Panc1 (cell line): ENCODE measurements at regions of chr13 and their contacts with region 1.

Region 1: DNA sequence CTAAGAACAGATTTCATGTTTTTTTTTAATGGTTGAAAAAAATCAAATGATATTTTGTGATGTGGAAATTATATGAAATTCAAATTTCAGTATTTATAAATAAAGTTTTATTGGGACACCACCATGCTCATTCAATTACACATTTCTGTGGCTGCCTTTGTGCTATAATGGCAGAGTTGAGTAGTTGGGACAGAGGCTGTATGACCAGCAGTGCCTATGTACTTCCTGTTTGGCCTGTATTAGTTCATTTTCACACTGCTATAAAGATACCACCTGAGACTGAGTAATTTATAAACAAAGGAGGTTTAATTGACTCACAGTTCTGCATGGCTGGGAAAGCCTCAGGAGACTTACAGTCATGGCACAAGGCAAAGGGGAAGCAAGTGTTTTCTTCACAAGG is 33.6 kb downstream of the AKAP11 start:
- DNase-seq: no peak
- ATAC-seq: no peak
- H3K4me3 ChIP-seq: no peak overlapping the region
- H3K27ac ChIP-seq: no peak overlapping the region
- H3K4me1 ChIP-seq: no peaks in the 10 kb centered on the region
- H3K27me3 ChIP-seq: no peaks in the 10 kb centered on the region
- CTCF ChIP-seq: no peak

Region 2: DNA sequence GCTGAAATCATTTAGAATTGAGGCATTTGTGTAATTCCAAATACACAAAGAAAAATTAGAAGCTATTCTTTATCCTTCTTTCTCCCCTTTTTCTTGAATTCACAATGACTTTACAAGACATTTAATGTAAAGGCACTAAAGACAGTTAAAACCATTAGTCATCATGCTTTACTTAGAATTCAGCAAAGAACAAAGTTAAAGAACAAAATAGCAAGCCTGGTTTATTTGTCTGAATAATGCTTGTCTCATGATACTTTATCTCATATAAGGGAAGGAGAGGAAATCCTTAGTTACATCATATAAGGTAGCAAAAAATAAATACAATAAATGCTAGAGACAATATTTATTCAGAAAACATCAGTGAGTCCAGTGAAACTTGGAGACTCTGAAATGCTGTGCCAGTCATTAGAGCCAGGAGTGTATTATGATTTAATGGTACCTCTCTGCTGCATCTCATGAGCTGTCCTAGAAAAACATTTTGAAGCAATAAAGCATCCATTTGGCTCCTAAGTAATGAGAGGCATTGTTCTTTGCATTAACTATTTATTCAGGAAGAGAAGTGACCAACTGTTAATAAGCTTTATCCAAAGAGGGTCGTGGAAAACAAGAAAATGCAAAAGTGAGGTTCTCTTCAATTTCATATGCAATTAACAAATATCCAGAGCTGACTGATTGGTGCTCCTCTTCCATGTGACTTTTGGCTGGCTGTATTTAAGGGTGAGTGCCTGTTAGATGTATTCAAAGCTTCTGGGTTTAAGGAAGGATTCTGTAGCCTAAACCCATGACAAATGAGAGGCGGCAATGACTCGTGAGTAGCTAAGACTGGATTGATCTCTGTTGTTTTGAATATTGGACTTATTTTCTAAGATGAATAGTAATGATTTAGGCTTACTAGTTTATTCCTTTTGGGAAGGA is 152.0 kb before region 1 on chr13:
- CTCF ChIA-PET with region 1: no interaction called
- POLR2A ChIA-PET with region 1: interaction called, 11 read pairs
- in situ Hi-C with region 1: no loop called
- intact Hi-C with region 1: no loop called
- DNase-seq: no peak
- ATAC-seq: no peak
- H3K4me3 ChIP-seq: no peak overlapping the region
- H3K27ac ChIP-seq: no peak overlapping the region
- H3K4me1 ChIP-seq: no peaks in the 10 kb centered on the region
- H3K27me3 ChIP-seq: no peaks in the 10 kb centered on the region
- CTCF ChIP-seq: no peak